HEK293T (cell line): ENCODE measurements at regions of chr9 and their contacts with region 1.

Region 1: DNA sequence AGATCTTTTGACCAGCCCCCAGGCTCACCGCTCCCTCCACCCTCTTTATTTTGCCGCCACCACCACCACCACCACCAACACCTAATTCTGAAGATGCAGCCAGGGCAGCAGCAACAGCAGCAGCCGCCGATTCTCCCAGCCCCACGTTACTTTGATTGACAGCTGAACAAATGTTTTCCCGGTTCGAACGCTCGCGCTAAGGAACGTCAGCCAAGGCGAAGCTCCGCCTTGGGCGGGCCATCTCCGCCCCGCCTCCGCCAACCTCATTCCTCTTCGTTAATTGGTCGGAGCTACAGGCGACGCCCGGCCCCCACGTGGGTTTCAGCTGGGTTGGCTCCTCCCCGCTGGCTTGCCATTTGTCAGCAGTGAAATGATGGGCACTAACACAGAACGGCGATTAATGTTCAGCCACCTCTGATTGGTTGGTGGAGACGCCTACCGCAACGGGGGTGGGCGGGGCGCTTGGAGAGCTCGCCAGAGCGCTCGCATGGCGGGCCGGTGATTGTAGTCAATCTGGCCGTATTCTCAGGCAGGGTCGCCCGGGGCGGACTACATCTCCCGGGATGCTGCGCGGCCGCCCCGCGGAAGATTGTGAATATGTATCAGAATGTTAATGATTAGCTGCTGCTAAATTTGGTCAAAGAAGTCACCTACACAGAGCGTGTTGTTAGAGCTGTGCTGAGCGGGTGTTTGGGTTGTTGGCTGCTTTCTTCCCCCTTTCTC is at the start of gene TLE4:
- DNase-seq: peak; percentile 100

Region 2: GRCh38 chr9:79477955-79478771 is 93.3 kb before region 1 on chr9:
- CTCF ChIA-PET with region 1: interaction called, 4 read pairs
- POLR2A ChIA-PET with region 1: interaction called, 34 read pairs
- DNase-seq: peak; percentile 89

Region 3: DNA sequence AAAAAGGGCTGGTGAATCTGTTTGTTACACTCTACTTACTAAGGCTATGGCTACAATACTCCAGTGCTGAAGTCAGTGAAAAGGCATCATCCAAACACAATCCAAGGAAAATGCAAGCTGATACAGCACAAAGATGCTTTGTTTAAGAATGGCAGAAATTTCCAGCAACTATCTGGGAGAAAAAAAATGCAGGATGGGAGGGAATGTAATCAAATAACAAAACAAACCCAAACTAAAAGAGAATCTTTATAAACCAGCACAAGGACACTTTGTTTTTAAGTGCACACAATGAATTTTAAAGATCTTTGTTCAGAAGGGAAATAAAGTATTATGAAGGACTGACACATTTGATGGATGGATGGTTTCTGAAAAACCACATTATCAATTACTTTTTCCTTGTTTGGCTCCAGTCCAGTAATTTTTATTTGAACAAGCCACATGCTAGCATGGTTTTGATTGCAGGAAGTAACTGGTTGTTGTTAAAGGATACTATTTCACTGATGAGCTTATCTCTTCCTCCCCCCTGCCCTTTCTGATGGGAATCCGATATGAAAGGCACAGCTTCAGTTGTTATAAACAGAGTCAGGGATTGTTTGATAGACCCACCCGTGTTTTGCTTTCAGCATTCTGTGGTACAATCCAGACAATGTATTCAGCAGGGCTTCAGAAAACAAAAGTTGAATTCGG is 11.8 kb before region 1 on chr9:
- CTCF ChIA-PET with region 1: interaction called, 3 read pairs
- POLR2A ChIA-PET with region 1: interaction called, 54 read pairs
- DNase-seq: no peak

Region 4: DNA sequence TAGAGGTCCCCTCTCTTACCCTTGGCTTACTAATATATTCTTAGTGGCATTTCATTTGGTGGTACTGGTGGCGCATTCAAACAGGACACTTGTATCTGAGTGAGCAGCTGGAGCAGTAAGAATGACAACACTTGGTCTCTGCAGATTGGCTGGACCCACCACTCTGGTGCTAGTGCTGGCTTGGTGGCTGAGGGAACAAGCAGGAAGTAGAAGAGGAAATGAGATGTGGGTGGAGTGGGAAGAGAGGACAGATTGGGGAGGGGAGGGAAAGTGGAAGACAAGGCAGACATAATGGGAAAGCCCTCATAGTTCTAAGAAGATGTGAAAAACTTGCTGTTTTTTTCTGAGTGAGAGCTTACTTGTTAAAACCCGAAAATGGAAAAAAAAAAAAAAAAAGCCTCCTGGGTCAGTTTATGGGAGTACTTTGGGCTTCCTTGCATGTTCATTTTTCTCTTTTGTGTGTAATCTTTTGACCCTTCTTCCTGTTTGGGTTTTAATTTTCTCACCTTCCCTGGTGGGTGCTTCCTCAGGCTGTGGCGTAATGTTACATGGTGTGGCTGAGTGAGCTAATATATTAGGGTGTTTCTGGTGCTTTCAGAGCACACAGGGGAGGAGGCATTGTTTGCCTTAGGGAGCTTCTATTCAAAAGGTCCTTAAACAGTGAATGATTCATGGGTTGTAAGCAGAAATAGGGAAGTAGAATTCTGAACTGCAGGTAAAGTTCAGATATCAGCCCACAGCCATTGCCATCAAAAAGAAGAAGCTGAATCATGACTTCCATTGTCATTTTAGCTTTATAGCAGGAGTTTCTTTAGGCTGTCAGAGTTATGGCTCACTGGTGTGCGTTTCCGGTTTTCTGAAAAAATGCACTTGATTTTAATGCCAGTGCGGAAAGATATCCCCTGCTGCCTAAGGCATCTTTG is 52.6 kb after region 1 on chr9:
- CTCF ChIA-PET with region 1: no interaction called
- POLR2A ChIA-PET with region 1: interaction called, 10 read pairs
- DNase-seq: peak; percentile 62

Region 5: DNA sequence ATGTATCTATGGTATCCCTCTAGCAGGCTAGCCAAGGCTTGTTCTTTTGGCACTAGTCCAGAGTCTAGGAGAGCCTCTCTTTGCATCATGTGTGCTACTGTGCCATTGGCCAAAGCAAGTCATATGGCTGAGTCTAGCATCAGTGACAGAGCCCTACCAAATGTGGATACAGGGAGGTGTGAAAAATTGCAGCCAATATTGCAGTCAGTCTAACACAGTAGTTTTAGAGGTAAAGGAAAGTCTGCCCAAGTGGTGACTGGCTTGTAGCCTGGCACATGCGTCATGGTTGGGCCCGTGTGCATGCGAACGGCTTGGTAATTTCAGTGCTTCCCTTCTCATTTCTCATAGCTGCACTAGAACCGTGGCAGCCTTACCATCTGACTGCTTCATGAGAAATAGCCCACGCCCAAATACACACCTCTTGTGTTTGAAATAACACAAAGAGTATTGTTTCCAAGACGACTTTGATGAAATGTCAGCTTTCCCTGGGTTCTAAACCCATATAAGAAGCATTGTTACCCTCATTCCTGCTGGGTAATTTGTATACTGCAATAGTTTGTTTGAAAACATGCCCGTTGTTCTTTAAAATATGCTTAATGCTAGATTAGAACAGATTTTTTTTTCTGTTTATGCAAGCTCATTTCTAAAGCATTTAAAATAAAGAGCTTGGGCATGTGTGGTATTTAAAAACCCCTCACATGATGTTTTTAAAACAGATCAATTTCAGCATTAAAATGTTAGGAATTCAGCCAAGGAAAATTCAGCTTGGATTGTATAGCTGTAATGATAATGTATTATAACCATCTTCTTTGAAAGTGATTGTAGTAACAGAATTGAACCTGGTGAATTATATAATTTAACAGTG is 113.5 kb after region 1 on chr9:
- CTCF ChIA-PET with region 1: interaction called, 3 read pairs
- POLR2A ChIA-PET with region 1: interaction called, 12 read pairs
- DNase-seq: no peak

Region 6: DNA sequence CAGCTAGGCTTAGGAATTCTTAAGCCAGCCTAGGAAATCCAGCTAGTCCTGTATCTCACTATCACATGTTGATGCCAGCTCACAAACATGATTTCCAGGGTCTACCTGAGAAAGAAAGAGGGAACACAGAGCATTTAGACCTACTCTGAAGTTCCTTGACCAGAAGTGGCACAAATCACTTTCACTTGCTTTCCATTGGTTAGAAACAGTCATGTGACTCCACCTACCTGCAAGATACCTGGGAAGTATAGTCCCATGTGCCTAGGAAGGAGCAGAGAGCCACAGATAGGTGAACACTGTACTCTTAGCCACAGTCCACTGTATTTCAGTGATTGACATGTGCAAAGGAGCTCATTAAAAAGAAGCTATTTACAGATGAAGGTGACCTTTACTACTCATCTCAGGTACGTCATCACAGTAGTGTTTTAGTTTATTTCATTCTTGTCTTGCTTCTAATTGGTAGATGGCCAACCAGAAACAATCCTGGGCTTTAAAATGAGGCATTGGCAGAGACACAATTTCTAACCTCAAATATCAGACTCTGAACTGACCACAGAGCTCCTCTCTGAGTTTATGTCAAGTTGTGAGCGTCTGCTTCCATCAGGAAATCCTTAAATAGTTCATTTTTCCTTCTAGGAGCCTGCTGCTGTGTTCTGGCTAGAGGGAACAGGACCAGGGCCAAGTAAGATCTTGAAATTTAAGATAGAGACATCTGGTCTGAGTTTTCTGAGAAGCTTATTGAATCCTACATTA is 341.0 kb after region 1 on chr9:
- CTCF ChIA-PET with region 1: no interaction called
- POLR2A ChIA-PET with region 1: interaction called, 11 read pairs
- DNase-seq: no peak